Activated CD8-positive, alpha-beta memory T cell treated with anti-CD3 and anti-CD28 coated beads, Interleukin-2, amount 10 ng/mL, durations not matched to agents 7 days and 5 days (primary cell): ENCODE measurements at regions of chr2 and their contacts with region 1.

Region 1: GRCh38 chr2:70871398-70872211 is 36.0 kb upstream of the CD207 start:
- DNase-seq: peak; percentile 86
- ATAC-seq: peak; percentile 96
- H3K4me3 Mint-ChIP-seq: no peak overlapping the region
- H3K27ac Mint-ChIP-seq: no peak overlapping the region
- H3K4me1 Mint-ChIP-seq: peaks cover 2% of the 10 kb centered on the region
- H3K27me3 Mint-ChIP-seq: peaks cover 48% of the 10 kb centered on the region

Region 2: GRCh38 chr2:70789304-70790135 is 82.1 kb before region 1 on chr2:
- CTCF ChIA-PET with region 1: interaction called, 31 read pairs
- DNase-seq: peak; percentile 78
- ATAC-seq: peak; percentile 82
- H3K4me3 Mint-ChIP-seq: peak overlapping the region; percentile 56
- H3K27ac Mint-ChIP-seq: no peak overlapping the region
- H3K4me1 Mint-ChIP-seq: peaks cover 7% of the 10 kb centered on the region
- H3K27me3 Mint-ChIP-seq: peaks cover 70% of the 10 kb centered on the region

Region 3: GRCh38 chr2:70887550-70888246 is 16.1 kb after region 1 on chr2:
- CTCF ChIA-PET with region 1: interaction called, 11 read pairs
- DNase-seq: no peak
- ATAC-seq: no peak
- H3K4me3 Mint-ChIP-seq: peak overlapping the region; percentile 35
- H3K27ac Mint-ChIP-seq: peak overlapping the region; percentile 34
- H3K4me1 Mint-ChIP-seq: peaks cover 26% of the 10 kb centered on the region
- H3K27me3 Mint-ChIP-seq: peaks cover 93% of the 10 kb centered on the region

Region 4: DNA sequence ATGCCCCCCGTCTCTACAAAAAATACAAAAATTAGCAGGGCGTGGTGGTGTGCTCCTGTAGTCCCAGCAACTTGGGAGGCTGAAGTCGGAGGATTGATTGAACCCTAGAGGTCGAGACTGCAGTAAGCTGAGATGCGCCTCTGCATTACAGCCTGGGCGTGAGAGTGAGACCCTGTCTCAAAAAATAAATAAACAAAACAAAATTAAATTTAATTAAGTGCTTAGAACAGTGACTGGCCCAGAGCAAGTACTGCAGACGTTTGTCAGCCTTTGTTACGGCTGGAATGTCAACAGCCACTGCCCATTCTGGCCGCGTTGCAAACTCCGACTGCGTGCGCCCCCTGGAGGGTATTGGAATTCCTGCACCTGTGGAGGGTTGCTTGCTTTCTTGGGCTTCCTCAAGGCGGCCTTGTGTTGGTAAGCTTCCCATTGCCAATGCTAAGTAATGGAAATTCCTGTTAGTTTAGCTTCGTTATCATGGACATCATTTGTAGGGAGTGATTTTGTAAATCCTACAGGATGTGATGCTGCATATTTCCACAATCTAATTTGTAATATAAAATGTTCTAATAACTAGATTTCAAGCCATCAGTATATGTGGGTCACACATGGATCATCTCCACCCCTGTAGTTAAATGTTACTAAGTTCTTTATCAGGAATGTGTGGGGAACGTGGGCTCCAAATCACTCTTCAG is 48.2 kb after region 1 on chr2:
- CTCF ChIA-PET with region 1: interaction called, 96 read pairs
- DNase-seq: peak; percentile 79
- ATAC-seq: peak; percentile 51
- H3K4me3 Mint-ChIP-seq: no peak overlapping the region
- H3K27ac Mint-ChIP-seq: no peak overlapping the region
- H3K4me1 Mint-ChIP-seq: no peaks in the 10 kb centered on the region
- H3K27me3 Mint-ChIP-seq: peaks cover 18% of the 10 kb centered on the region

Region 5: DNA sequence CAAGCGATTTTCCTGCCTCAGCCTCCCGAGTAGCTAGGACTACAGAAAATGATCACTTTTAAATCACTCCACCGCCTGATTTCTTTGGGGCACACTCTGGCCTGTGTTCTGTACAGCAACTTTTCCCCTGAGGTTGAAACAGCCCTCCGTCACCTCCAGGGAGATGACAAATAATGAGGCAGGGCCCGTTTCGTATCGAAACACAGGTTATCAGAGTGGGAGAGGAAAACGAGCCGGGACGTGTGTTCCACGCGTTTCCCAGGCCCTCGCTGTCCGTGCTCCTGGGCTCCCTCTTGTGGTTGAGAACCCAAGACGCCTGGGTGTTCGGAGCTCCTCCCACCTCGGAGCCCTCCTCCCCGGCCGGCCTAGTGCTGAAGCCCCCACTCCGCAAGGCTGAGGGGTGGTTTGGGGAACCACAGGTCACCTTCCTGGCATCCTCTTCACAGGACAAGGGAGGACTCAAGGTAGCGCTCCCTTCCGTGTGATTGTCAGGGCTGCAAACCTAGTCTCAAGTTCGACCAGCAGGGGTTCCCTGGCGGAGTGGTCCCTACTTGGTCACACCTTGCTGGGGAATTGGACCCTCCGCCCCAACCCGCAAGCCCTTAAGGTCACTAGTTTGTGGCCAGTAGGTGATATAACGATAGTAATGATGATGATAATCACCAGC is 76.9 kb after region 1 on chr2:
- CTCF ChIA-PET with region 1: interaction called, 84 read pairs
- DNase-seq: peak; percentile 81
- ATAC-seq: peak; percentile 97
- H3K4me3 Mint-ChIP-seq: peak overlapping the region; percentile 58
- H3K27ac Mint-ChIP-seq: no peak overlapping the region
- H3K4me1 Mint-ChIP-seq: peaks cover 17% of the 10 kb centered on the region
- H3K27me3 Mint-ChIP-seq: peaks cover 33% of the 10 kb centered on the region